Activated CD4-positive, alpha-beta memory T cell treated with anti-CD3 and anti-CD28 coated beads for 36 hours (primary cell): ENCODE measurements at regions of chr1 and their contacts with region 1.

Region 1: GRCh38 chr1:53326088-53326597 is 1.7 kb downstream of the LRP8 start:
- DNase-seq: peak; percentile 98
- H3K4me3 Mint-ChIP-seq: peak overlapping the region; percentile 95
- H3K27ac Mint-ChIP-seq: peak overlapping the region; percentile 97
- H3K4me1 Mint-ChIP-seq: peaks cover 23% of the 10 kb centered on the region
- H3K27me3 Mint-ChIP-seq: no peaks in the 10 kb centered on the region

Region 2: GRCh38 chr1:53047737-53048732 is 278.1 kb before region 1 on chr1:
- CTCF ChIA-PET with region 1: no interaction called
- POLR2A ChIA-PET with region 1: no interaction called
- intact Hi-C with region 1: no loop called
- DNase-seq: peak; percentile 15
- H3K4me3 Mint-ChIP-seq: no peak overlapping the region
- H3K27ac Mint-ChIP-seq: peak overlapping the region; percentile 71
- H3K4me1 Mint-ChIP-seq: peaks cover 11% of the 10 kb centered on the region
- H3K27me3 Mint-ChIP-seq: no peaks in the 10 kb centered on the region

Region 3: GRCh38 chr1:53238197-53239155 is 87.7 kb before region 1 on chr1 and contains the start of gene MAGOH:
- CTCF ChIA-PET with region 1: no interaction called
- POLR2A ChIA-PET with region 1: no interaction called
- intact Hi-C with region 1: loop called (anchors 2 kb)
- DNase-seq: peak; percentile 97
- H3K4me3 Mint-ChIP-seq: peak within 1 kb of the TSS; percentile 97
- H3K27ac Mint-ChIP-seq: peak within 1 kb of the TSS; percentile 85
- H3K4me1 Mint-ChIP-seq: peaks cover 26% of the 10 kb centered on the region
- H3K27me3 Mint-ChIP-seq: no peaks in the 10 kb centered on the region
- total RNA-seq, gene MAGOH: 85.7 to 89.5 TPM

Region 4: GRCh38 chr1:53249706-53250105 is 76.4 kb before region 1 on chr1:
- CTCF ChIA-PET with region 1: no interaction called
- POLR2A ChIA-PET with region 1: no interaction called
- intact Hi-C with region 1: no loop called
- DNase-seq: no peak
- H3K4me3 Mint-ChIP-seq: no peak overlapping the region
- H3K27ac Mint-ChIP-seq: no peak overlapping the region
- H3K4me1 Mint-ChIP-seq: no peaks in the 10 kb centered on the region
- H3K27me3 Mint-ChIP-seq: no peaks in the 10 kb centered on the region

Region 5: GRCh38 chr1:53278201-53278725 is 47.9 kb before region 1 on chr1:
- CTCF ChIA-PET with region 1: interaction called, 16 read pairs
- POLR2A ChIA-PET with region 1: no interaction called
- intact Hi-C with region 1: no loop called
- DNase-seq: peak; percentile 77
- H3K4me3 Mint-ChIP-seq: no peak overlapping the region
- H3K27ac Mint-ChIP-seq: no peak overlapping the region
- H3K4me1 Mint-ChIP-seq: no peaks in the 10 kb centered on the region
- H3K27me3 Mint-ChIP-seq: no peaks in the 10 kb centered on the region

Region 6: DNA sequence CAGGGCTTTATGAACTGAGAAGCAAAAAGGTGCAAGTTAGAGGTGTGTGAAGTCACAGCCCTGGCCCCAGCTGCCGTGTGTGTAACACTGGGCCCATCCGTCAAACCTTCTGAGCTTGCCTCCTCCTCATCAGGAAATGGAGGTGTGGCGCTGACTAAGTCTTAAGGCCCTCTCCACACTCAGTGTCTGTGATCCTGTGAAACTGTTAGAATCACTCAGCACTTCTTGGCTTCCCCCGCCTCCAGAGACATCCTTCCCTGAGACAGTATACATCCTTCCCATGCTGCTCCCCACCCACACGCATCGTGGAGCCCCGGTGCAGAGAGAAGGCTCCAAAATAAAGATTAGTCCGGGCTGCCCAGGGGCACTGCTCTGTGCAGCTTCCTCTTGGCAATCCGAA is 31.6 kb before region 1 on chr1:
- CTCF ChIA-PET with region 1: interaction called, 4 read pairs
- POLR2A ChIA-PET with region 1: interaction called, 8 read pairs
- intact Hi-C with region 1: loop called (anchors 1 kb)
- DNase-seq: peak; percentile 84
- H3K4me3 Mint-ChIP-seq: no peak overlapping the region
- H3K27ac Mint-ChIP-seq: peak overlapping the region; percentile 67
- H3K4me1 Mint-ChIP-seq: peaks cover 42% of the 10 kb centered on the region
- H3K27me3 Mint-ChIP-seq: no peaks in the 10 kb centered on the region

Region 7: DNA sequence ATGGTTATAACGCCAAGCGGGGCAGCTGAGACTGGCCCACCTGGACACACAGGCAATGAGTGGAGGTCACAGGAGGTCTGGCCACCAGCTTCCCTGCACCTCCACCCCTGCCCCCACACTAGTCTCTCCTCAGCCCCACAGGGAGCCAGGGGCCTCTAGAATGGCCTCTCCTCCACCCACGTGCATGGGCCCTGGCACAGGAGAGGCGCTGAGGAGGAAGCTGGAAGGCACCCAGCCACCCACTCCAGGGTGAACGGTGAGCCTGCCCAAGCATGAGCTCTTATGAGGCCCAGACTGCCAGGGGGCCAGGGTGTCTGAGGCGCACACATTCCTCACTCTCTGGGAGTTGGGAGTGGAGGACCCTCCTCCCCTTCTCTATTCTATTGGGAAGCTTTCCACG is 20.5 kb before region 1 on chr1:
- CTCF ChIA-PET with region 1: no interaction called
- POLR2A ChIA-PET with region 1: no interaction called
- intact Hi-C with region 1: no loop called
- DNase-seq: no peak
- H3K4me3 Mint-ChIP-seq: no peak overlapping the region
- H3K27ac Mint-ChIP-seq: no peak overlapping the region
- H3K4me1 Mint-ChIP-seq: peaks cover 8% of the 10 kb centered on the region
- H3K27me3 Mint-ChIP-seq: no peaks in the 10 kb centered on the region

Region 8: GRCh38 chr1:53367503-53368304 is 41.6 kb after region 1 on chr1:
- CTCF ChIA-PET with region 1: interaction called, 4 read pairs
- POLR2A ChIA-PET with region 1: interaction called, 5 read pairs
- intact Hi-C with region 1: loop called (anchors 1 kb)
- DNase-seq: peak; percentile 63
- H3K4me3 Mint-ChIP-seq: peak overlapping the region; percentile 61
- H3K27ac Mint-ChIP-seq: peak overlapping the region; percentile 77
- H3K4me1 Mint-ChIP-seq: peaks cover 18% of the 10 kb centered on the region
- H3K27me3 Mint-ChIP-seq: no peaks in the 10 kb centered on the region

Region 9: DNA sequence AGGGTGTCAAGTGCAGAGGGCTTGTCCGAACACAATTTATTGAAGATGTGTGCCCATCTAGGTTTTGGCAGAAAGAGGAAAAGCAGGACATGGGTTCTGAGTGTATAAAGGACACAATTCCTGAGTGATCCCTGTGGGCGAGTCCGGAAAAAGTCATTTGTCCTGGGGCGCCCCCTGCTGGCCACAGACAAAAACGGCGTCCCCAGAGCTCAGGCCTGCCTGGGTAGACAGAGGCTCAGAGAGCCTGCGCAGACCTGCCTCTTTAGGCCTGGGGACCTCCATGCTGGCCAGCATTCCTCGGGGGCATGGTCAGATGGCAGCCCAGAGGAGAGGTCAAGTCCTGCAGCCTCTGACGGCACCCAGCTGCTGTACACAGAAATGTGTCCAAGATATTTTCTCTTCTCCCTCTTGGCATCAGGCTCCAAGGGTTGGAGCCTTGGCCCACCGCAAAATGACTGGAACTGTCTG is 67.2 kb after region 1 on chr1:
- CTCF ChIA-PET with region 1: interaction called, 10 read pairs
- POLR2A ChIA-PET with region 1: no interaction called
- intact Hi-C with region 1: loop called (anchors 1 kb)
- DNase-seq: peak; percentile 80
- H3K4me3 Mint-ChIP-seq: no peak overlapping the region
- H3K27ac Mint-ChIP-seq: no peak overlapping the region
- H3K4me1 Mint-ChIP-seq: peaks cover 2% of the 10 kb centered on the region
- H3K27me3 Mint-ChIP-seq: no peaks in the 10 kb centered on the region

Region 10: GRCh38 chr1:53413175-53414001 is 87.2 kb after region 1 on chr1:
- CTCF ChIA-PET with region 1: interaction called, 6 read pairs
- POLR2A ChIA-PET with region 1: interaction called, 6 read pairs
- intact Hi-C with region 1: loop called (anchors 1 kb)
- DNase-seq: peak; percentile 82
- H3K4me3 Mint-ChIP-seq: peak overlapping the region; percentile 40
- H3K27ac Mint-ChIP-seq: peak overlapping the region; percentile 89
- H3K4me1 Mint-ChIP-seq: peaks cover 64% of the 10 kb centered on the region
- H3K27me3 Mint-ChIP-seq: no peaks in the 10 kb centered on the region

Region 11: GRCh38 chr1:53511933-53512806 is 186.0 kb after region 1 on chr1:
- CTCF ChIA-PET with region 1: no interaction called
- POLR2A ChIA-PET with region 1: no interaction called
- intact Hi-C with region 1: no loop called
- DNase-seq: no peak
- H3K4me3 Mint-ChIP-seq: no peak overlapping the region
- H3K27ac Mint-ChIP-seq: no peak overlapping the region
- H3K4me1 Mint-ChIP-seq: no peaks in the 10 kb centered on the region
- H3K27me3 Mint-ChIP-seq: no peaks in the 10 kb centered on the region